Posterior vena cava (tissue), 2 donors: ENCODE measurements at regions of chr4 and their contacts with region 1.

Region 1: GRCh38 chr4:141099326-141099725 is 33.9 kb downstream of the RNF150 start:
- DNase-seq: no peak

Region 2: GRCh38 chr4:141849778-141850177 is 750.5 kb after region 1 on chr4:
- intact Hi-C with region 1: loop called in 1 of 2 experiments (anchors 5 kb)
- DNase-seq: no peak